Heart left ventricle (tissue), 16 donors: ENCODE measurements at regions of chr13 and their contacts with region 1.

Region 1: DNA sequence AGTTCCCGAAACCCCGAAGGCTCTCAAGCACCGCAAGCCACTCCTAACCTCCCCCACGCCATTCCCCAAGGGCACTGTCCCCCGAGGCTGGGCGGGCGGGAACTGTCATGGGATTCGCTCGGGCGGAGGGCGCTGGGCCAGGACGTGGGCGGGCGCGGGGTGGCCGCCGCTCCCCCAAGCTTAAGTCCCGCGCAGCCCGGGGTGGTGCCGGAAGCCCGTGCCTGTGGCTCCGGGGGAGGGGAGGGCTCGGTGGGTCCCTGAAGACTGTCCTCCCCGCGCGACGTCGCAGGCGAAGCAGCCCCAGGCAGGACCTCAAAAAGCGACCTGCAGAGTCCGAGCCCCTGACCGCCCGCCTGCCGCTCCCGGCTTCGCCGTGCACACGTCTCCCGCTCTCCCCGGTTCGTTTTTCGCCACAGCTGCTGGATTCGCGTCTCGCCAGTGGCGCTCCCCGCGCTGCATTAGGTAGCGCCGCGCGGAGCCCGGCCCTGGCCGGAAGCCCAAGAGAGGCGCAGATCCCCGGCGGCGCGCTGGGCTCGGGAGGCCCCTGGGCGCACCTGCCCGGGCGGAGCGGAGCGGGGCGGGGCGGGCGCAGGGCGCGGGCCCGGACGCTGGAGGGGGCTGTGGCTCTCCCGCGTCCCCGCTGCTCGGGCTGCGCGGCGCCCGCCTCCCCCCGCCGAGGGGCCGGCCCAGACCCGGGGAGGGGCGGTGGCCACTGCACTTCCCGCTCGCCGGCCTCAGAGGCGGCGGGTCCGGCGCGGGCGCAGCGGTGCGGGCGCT is at the start of gene FARP1:
- DNase-seq: peak; percentile 71 to 84 (median 83)
- ATAC-seq: peak; percentile 70 to 96 (median 93)
- H3K4me3 ChIP-seq: peak within 1 kb of the TSS; percentile 57 to 99 (median 68)
- H3K27ac ChIP-seq: peak within 1 kb of the TSS in 11 of 12 donors; percentile 46 to 79 (median 75)
- H3K4me1 ChIP-seq: peaks cover 0 to 30% (median 16%) of the 10 kb centered on the region in 12 donors
- H3K27me3 ChIP-seq: peaks cover 0 to 31% (median 0%) of the 10 kb centered on the region in 9 donors
- CTCF ChIP-seq: peak in 10 of 12 donors; percentile 22 to 65 (median 51)
- POLR2A ChIP-seq: no peak
- total RNA-seq, gene FARP1: 9.4 to 51.8 (median 28.0) TPM

Region 2: GRCh38 chr13:98033277-98034247 is 109.0 kb before region 1 on chr13:
- intact Hi-C with region 1: no loop called
- DNase-seq: peak in 1 of 5 donors; percentile 25
- ATAC-seq: peak in 1 of 4 donors; percentile 36
- H3K4me3 ChIP-seq: no peak overlapping the region
- H3K27ac ChIP-seq: no peak overlapping the region
- H3K4me1 ChIP-seq: no peaks in the 10 kb centered on the region
- H3K27me3 ChIP-seq: no peaks in the 10 kb centered on the region
- CTCF ChIP-seq: peak in 10 of 12 donors; percentile 21 to 60 (median 48)
- POLR2A ChIP-seq: no peak

Region 3: DNA sequence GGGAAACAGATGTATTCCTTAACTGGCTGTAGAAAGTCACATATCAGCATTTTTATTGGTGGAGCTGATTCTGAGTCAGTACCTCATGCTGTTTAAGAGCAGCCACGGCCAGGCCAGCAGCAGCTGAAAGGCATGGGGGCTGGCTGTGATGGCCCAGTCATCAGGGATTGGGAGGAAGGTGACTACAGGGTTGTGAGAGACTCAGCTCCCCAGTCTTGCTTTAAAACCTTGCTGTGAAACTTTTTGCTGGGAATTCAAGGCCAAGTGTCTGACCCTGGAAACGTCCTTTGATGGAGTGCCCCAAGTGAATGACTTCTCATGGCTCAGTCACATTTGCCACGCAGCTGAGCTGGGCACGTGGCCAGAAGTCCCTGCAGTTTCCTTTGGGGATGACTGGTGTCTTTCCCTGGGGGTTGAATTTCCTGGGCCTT is 73.6 kb after region 1 on chr13:
- intact Hi-C with region 1: loop called in 2 of 10 experiments (anchors 10 kb)
- DNase-seq: peak; percentile 41 to 70 (median 59)
- ATAC-seq: peak in 3 of 4 donors; percentile 40 to 61 (median 48)
- H3K4me3 ChIP-seq: no peak overlapping the region
- H3K27ac ChIP-seq: peak overlapping the region in 4 of 12 donors; percentile 9 to 42 (median 25)
- H3K4me1 ChIP-seq: peaks cover 0 to 42% (median 20%) of the 10 kb centered on the region in 12 donors
- H3K27me3 ChIP-seq: no peaks in the 10 kb centered on the region
- CTCF ChIP-seq: no peak
- POLR2A ChIP-seq: no peak

Region 4: DNA sequence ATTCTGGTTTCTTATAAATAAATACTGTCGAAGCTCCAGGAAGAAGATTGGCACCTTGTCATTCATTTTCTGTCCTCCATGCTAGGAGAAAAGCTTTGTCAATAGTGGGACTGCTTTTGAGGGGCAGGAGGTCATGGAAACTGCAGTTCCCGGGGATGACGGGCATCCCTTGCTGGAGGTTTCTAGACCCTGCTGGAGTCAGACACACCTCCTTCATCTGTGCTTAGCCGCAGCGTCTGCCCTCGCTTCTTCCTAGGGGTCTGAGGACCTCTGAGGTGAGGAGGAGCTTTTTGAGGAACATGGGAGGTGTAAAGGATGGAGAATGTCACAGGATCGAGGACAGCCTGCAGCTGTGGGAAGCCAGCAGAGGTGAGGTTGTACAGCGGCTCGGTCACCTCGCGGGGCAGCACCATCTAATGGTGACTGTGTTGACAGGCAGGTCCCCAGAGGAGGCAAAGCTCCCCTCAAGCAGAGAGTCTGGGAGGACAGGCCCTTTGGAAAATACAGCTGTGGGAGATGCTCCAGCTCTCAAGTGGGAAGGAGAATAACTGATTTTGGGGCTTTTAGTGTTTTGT is 207.2 kb after region 1 on chr13:
- intact Hi-C with region 1: loop called in 2 of 10 experiments (anchors 2 to 10 kb)
- DNase-seq: peak in 2 of 5 donors; percentile 11 to 42
- ATAC-seq: peak in 3 of 4 donors; percentile 64 to 86 (median 79)
- H3K4me3 ChIP-seq: no peak overlapping the region
- H3K27ac ChIP-seq: no peak overlapping the region
- H3K4me1 ChIP-seq: peaks cover 0 to 11% (median 0%) of the 10 kb centered on the region in 12 donors
- H3K27me3 ChIP-seq: no peaks in the 10 kb centered on the region
- CTCF ChIP-seq: peak in 11 of 12 donors; percentile 9 to 55 (median 28)
- POLR2A ChIP-seq: no peak

Region 5: DNA sequence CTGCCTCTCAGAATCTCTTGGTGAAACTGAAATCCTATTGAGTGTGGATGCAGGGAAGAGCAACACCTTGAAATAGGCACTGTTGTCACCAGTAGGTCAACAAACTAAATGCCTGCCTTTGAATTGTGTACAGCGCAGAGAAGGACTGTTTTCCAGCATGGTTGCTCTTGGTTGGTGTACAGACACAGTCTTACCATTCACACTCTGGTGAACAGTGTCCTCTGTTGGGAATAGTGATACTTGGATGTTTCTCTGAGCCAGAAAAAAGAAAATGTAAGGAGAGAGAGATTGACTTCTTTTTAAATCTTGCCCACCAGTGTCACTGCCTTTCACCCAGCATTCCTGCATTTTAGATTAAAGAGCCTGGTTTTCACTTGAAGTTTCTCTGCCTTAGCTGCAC is 254.7 kb after region 1 on chr13:
- intact Hi-C with region 1: loop called in 8 of 10 experiments (anchors 5 to 10 kb)
- DNase-seq: no peak
- ATAC-seq: peak in 2 of 4 donors; percentile 55 to 64
- H3K4me3 ChIP-seq: no peak overlapping the region
- H3K27ac ChIP-seq: no peak overlapping the region
- H3K4me1 ChIP-seq: peaks cover 0 to 4% (median 0%) of the 10 kb centered on the region in 12 donors
- H3K27me3 ChIP-seq: no peaks in the 10 kb centered on the region
- CTCF ChIP-seq: peak in 9 of 12 donors; percentile 18 to 55 (median 42)
- POLR2A ChIP-seq: no peak

Region 6: GRCh38 chr13:98429977-98430736 is 287.6 kb after region 1 on chr13:
- intact Hi-C with region 1: loop called in 1 of 10 experiments (anchors 5 kb)
- DNase-seq: no peak
- ATAC-seq: no peak
- H3K4me3 ChIP-seq: no peak overlapping the region
- H3K27ac ChIP-seq: no peak overlapping the region
- H3K4me1 ChIP-seq: peaks cover 0 to 9% (median 0%) of the 10 kb centered on the region in 12 donors
- H3K27me3 ChIP-seq: no peaks in the 10 kb centered on the region
- CTCF ChIP-seq: no peak
- POLR2A ChIP-seq: no peak

Region 7: GRCh38 chr13:98576963-98577822 is 434.6 kb after region 1 on chr13 and contains the start of gene STK24:
- intact Hi-C with region 1: loop called in 1 of 10 experiments (anchors 5 kb)
- DNase-seq: peak; percentile 74 to 88 (median 85)
- ATAC-seq: peak; percentile 58 to 87 (median 79)
- H3K4me3 ChIP-seq: peak within 1 kb of the TSS; percentile 74 to 99 (median 94)
- H3K27ac ChIP-seq: peak within 1 kb of the TSS; percentile 93 to 99 (median 97)
- H3K4me1 ChIP-seq: peaks cover 5 to 58% (median 36%) of the 10 kb centered on the region in 12 donors
- H3K27me3 ChIP-seq: no peaks in the 10 kb centered on the region
- CTCF ChIP-seq: peak in 1 of 12 donors; percentile 12
- POLR2A ChIP-seq: no peak
- total RNA-seq, gene STK24: 56.5 to 82.6 (median 63.0) TPM

Region 8: DNA sequence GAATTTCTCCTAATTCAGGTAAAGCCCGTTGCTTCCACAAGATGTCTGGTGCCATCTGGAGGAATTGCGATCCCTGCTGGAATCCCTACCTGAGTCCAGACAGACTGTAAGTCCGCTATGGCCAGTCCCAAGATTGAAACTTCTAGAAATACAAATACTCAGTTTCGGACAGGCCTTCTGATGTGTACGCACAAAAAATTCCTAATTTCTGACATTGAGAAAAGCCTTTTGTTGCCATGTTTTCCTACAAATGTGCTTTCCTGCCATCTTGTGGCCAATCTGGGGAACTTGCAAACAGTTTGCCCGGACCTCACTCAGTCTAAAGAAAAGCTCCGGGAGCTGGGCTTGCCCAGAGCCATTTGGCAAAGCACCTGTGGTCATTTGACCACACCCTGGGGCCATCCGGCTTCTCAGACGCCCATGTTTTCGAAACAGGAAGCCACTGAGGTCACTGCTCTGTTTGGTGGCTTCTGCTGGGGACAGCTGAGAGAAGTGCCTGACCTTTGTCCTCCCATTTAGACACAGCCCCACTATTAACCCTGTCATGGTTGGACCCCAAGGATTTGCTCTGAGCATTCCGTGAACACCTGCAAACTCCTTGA is 530.5 kb after region 1 on chr13:
- intact Hi-C with region 1: loop called in 4 of 10 experiments (anchors 5 to 10 kb)
- DNase-seq: peak; percentile 66 to 74 (median 70)
- ATAC-seq: peak; percentile 66 to 96 (median 92)
- H3K4me3 ChIP-seq: peak overlapping the region in 1 of 12 donors; percentile 14
- H3K27ac ChIP-seq: peak overlapping the region in 1 of 12 donors; percentile 1
- H3K4me1 ChIP-seq: peaks cover 0 to 15% (median 7%) of the 10 kb centered on the region in 12 donors
- H3K27me3 ChIP-seq: no peaks in the 10 kb centered on the region
- CTCF ChIP-seq: peak; percentile 82 to 96 (median 88)
- POLR2A ChIP-seq: no peak